CD8-positive, alpha-beta T cell (primary cell): ENCODE measurements at regions of chr9 and their contacts with region 1.

Region 1: GRCh38 chr9:127734747-127735529 is at the start of gene TOR2A:
- DNase-seq: peak; percentile 98 to 100 (median 99)
- ATAC-seq: peak; percentile 94
- H3K4me3 ChIP-seq: peak within 1 kb of the TSS; percentile 67 to 79
- H3K4me3 Mint-ChIP-seq: peak within 1 kb of the TSS; percentile 91
- H3K27ac ChIP-seq: peak within 1 kb of the TSS; percentile 59 to 87
- H3K27ac Mint-ChIP-seq: peak within 1 kb of the TSS; percentile 86
- H3K4me1 ChIP-seq: peaks cover 18% of the 10 kb centered on the region
- H3K4me1 Mint-ChIP-seq: peaks cover 7% of the 10 kb centered on the region
- H3K27me3 ChIP-seq: no peaks in the 10 kb centered on the region
- H3K27me3 Mint-ChIP-seq: no peaks in the 10 kb centered on the region
- CTCF ChIP-seq: peak; percentile 80
- total RNA-seq, gene TOR2A: 4.7 to 5.3 TPM

Region 2: GRCh38 chr9:127144670-127145445 is 590.1 kb before region 1 on chr9:
- CTCF ChIA-PET with region 1: no interaction called
- POLR2A ChIA-PET with region 1: no interaction called
- intact Hi-C with region 1: no loop called
- DNase-seq: peak in 2 of 9 experiments; percentile 6 to 15
- ATAC-seq: no peak
- H3K4me3 ChIP-seq: no peak overlapping the region
- H3K4me3 Mint-ChIP-seq: no peak overlapping the region
- H3K27ac ChIP-seq: no peak overlapping the region
- H3K27ac Mint-ChIP-seq: no peak overlapping the region
- H3K4me1 ChIP-seq: no peaks in the 10 kb centered on the region
- H3K4me1 Mint-ChIP-seq: no peaks in the 10 kb centered on the region
- H3K27me3 ChIP-seq: no peaks in the 10 kb centered on the region
- H3K27me3 Mint-ChIP-seq: no peaks in the 10 kb centered on the region
- CTCF ChIP-seq: no peak

Region 3: GRCh38 chr9:127347831-127348779 is 386.8 kb before region 1 on chr9:
- CTCF ChIA-PET with region 1: no interaction called
- POLR2A ChIA-PET with region 1: no interaction called
- intact Hi-C with region 1: no loop called
- DNase-seq: no peak
- ATAC-seq: no peak
- H3K4me3 ChIP-seq: no peak overlapping the region
- H3K4me3 Mint-ChIP-seq: no peak overlapping the region
- H3K27ac ChIP-seq: no peak overlapping the region
- H3K27ac Mint-ChIP-seq: no peak overlapping the region
- H3K4me1 ChIP-seq: no peaks in the 10 kb centered on the region
- H3K4me1 Mint-ChIP-seq: no peaks in the 10 kb centered on the region
- H3K27me3 ChIP-seq: no peaks in the 10 kb centered on the region
- H3K27me3 Mint-ChIP-seq: peaks cover 36% of the 10 kb centered on the region
- CTCF ChIP-seq: no peak

Region 4: GRCh38 chr9:127423934-127424675 is 310.8 kb before region 1 on chr9 and contains the start of gene ZNF79:
- CTCF ChIA-PET with region 1: no interaction called
- POLR2A ChIA-PET with region 1: no interaction called
- intact Hi-C with region 1: loop called in 1 of 2 experiments (anchors 1 kb)
- DNase-seq: peak; percentile 81 to 94 (median 91)
- ATAC-seq: peak; percentile 84
- H3K4me3 ChIP-seq: peak within 1 kb of the TSS; percentile 71 to 98
- H3K4me3 Mint-ChIP-seq: peak within 1 kb of the TSS; percentile 99
- H3K27ac ChIP-seq: peak within 1 kb of the TSS; percentile 67 to 72
- H3K27ac Mint-ChIP-seq: peak within 1 kb of the TSS; percentile 95
- H3K4me1 ChIP-seq: peaks cover 25% of the 10 kb centered on the region
- H3K4me1 Mint-ChIP-seq: peaks cover 44% of the 10 kb centered on the region
- H3K27me3 ChIP-seq: no peaks in the 10 kb centered on the region
- H3K27me3 Mint-ChIP-seq: no peaks in the 10 kb centered on the region
- CTCF ChIP-seq: no peak
- total RNA-seq, gene ZNF79: 7.5 to 7.7 TPM

Region 5: GRCh38 chr9:127586537-127586936 is 148.4 kb before region 1 on chr9:
- CTCF ChIA-PET with region 1: interaction called, 69 read pairs
- POLR2A ChIA-PET with region 1: interaction called, 12 read pairs
- intact Hi-C with region 1: loop called (anchors 1 kb)
- DNase-seq: peak; percentile 26 to 78 (median 64)
- ATAC-seq: peak; percentile 62
- H3K4me3 ChIP-seq: no peak overlapping the region
- H3K4me3 Mint-ChIP-seq: no peak overlapping the region
- H3K27ac ChIP-seq: no peak overlapping the region
- H3K27ac Mint-ChIP-seq: no peak overlapping the region
- H3K4me1 ChIP-seq: no peaks in the 10 kb centered on the region
- H3K4me1 Mint-ChIP-seq: peaks cover 3% of the 10 kb centered on the region
- H3K27me3 ChIP-seq: no peaks in the 10 kb centered on the region
- H3K27me3 Mint-ChIP-seq: peaks cover 13% of the 10 kb centered on the region
- CTCF ChIP-seq: peak; percentile 57

Region 6: GRCh38 chr9:127721391-127721853 is 13.5 kb before region 1 on chr9:
- CTCF ChIA-PET with region 1: interaction called, 11 read pairs
- POLR2A ChIA-PET with region 1: interaction called, 8 read pairs
- intact Hi-C with region 1: no loop called
- DNase-seq: peak in 3 of 9 experiments; percentile 14 to 58 (median 51)
- ATAC-seq: peak; percentile 26
- H3K4me3 ChIP-seq: peak overlapping the region in 1 of 2 experiments; percentile 43
- H3K4me3 Mint-ChIP-seq: peak overlapping the region; percentile 56
- H3K27ac ChIP-seq: peak overlapping the region in 1 of 2 experiments; percentile 69
- H3K27ac Mint-ChIP-seq: peak overlapping the region; percentile 83
- H3K4me1 ChIP-seq: peaks cover 28% of the 10 kb centered on the region
- H3K4me1 Mint-ChIP-seq: peaks cover 29% of the 10 kb centered on the region
- H3K27me3 ChIP-seq: no peaks in the 10 kb centered on the region
- H3K27me3 Mint-ChIP-seq: no peaks in the 10 kb centered on the region
- CTCF ChIP-seq: no peak

Region 7: GRCh38 chr9:127802576-127803443 is 67.9 kb after region 1 on chr9 and contains the start of gene FPGS:
- CTCF ChIA-PET with region 1: interaction called, 5 read pairs
- POLR2A ChIA-PET with region 1: no interaction called
- intact Hi-C with region 1: loop called (anchors 1 kb)
- DNase-seq: peak; percentile 57 to 92 (median 81)
- ATAC-seq: peak; percentile 87
- H3K4me3 ChIP-seq: peak within 1 kb of the TSS; percentile 95 to 98
- H3K4me3 Mint-ChIP-seq: peak within 1 kb of the TSS; percentile 92
- H3K27ac ChIP-seq: peak within 1 kb of the TSS; percentile 89
- H3K27ac Mint-ChIP-seq: peak within 1 kb of the TSS; percentile 87
- H3K4me1 ChIP-seq: peaks cover 21% of the 10 kb centered on the region
- H3K4me1 Mint-ChIP-seq: peaks cover 38% of the 10 kb centered on the region
- H3K27me3 ChIP-seq: no peaks in the 10 kb centered on the region
- H3K27me3 Mint-ChIP-seq: no peaks in the 10 kb centered on the region
- CTCF ChIP-seq: no peak
- total RNA-seq, gene FPGS: 91.9 to 95.3 TPM

Region 8: GRCh38 chr9:128159784-128160602 is 425.1 kb after region 1 on chr9 and contains the start of gene BBLN:
- CTCF ChIA-PET with region 1: no interaction called
- POLR2A ChIA-PET with region 1: no interaction called
- intact Hi-C with region 1: loop called in 1 of 2 experiments (anchors 1 kb)
- DNase-seq: peak; percentile 87 to 95 (median 93)
- ATAC-seq: peak; percentile 87
- H3K4me3 ChIP-seq: peak within 1 kb of the TSS; percentile 90 to 94
- H3K4me3 Mint-ChIP-seq: peak within 1 kb of the TSS; percentile 79
- H3K27ac ChIP-seq: peak within 1 kb of the TSS; percentile 70 to 86
- H3K27ac Mint-ChIP-seq: peak within 1 kb of the TSS; percentile 90
- H3K4me1 ChIP-seq: peaks cover 19% of the 10 kb centered on the region
- H3K4me1 Mint-ChIP-seq: peaks cover 17% of the 10 kb centered on the region
- H3K27me3 ChIP-seq: no peaks in the 10 kb centered on the region
- H3K27me3 Mint-ChIP-seq: no peaks in the 10 kb centered on the region
- CTCF ChIP-seq: no peak
- total RNA-seq, gene BBLN: 56.6 to 67.4 TPM